Activated CD4-positive, alpha-beta T cell treated with anti-CD3 and anti-CD28 coated beads, Interleukin-2, amount 10 ng/mL, durations not matched to agents 24 days and 14 days (primary cell): ENCODE measurements at regions of chr3 and their contacts with region 1.

Region 1: GRCh38 chr3:27927882-27928281 is 205.8 kb upstream of the EOMES start:
- DNase-seq: no peak
- H3K4me3 Mint-ChIP-seq: peak overlapping the region; percentile 45
- H3K27ac Mint-ChIP-seq: peak overlapping the region; percentile 66
- H3K4me1 Mint-ChIP-seq: peaks cover 43% of the 10 kb centered on the region
- H3K27me3 Mint-ChIP-seq: no peaks in the 10 kb centered on the region

Region 2: GRCh38 chr3:27454914-27455313 is 473.0 kb before region 1 on chr3:
- intact Hi-C with region 1: no loop called
- DNase-seq: no peak
- H3K4me3 Mint-ChIP-seq: peak overlapping the region; percentile 39
- H3K27ac Mint-ChIP-seq: peak overlapping the region; percentile 83
- H3K4me1 Mint-ChIP-seq: peaks cover 26% of the 10 kb centered on the region
- H3K27me3 Mint-ChIP-seq: no peaks in the 10 kb centered on the region

Region 3: GRCh38 chr3:27712136-27713077 is 215.5 kb before region 1 on chr3:
- intact Hi-C with region 1: loop called (anchors 5 kb)
- DNase-seq: peak; percentile 94
- H3K4me3 Mint-ChIP-seq: peak overlapping the region; percentile 94
- H3K27ac Mint-ChIP-seq: peak overlapping the region; percentile 68
- H3K4me1 Mint-ChIP-seq: peaks cover 26% of the 10 kb centered on the region
- H3K27me3 Mint-ChIP-seq: peaks cover 66% of the 10 kb centered on the region

Region 4: DNA sequence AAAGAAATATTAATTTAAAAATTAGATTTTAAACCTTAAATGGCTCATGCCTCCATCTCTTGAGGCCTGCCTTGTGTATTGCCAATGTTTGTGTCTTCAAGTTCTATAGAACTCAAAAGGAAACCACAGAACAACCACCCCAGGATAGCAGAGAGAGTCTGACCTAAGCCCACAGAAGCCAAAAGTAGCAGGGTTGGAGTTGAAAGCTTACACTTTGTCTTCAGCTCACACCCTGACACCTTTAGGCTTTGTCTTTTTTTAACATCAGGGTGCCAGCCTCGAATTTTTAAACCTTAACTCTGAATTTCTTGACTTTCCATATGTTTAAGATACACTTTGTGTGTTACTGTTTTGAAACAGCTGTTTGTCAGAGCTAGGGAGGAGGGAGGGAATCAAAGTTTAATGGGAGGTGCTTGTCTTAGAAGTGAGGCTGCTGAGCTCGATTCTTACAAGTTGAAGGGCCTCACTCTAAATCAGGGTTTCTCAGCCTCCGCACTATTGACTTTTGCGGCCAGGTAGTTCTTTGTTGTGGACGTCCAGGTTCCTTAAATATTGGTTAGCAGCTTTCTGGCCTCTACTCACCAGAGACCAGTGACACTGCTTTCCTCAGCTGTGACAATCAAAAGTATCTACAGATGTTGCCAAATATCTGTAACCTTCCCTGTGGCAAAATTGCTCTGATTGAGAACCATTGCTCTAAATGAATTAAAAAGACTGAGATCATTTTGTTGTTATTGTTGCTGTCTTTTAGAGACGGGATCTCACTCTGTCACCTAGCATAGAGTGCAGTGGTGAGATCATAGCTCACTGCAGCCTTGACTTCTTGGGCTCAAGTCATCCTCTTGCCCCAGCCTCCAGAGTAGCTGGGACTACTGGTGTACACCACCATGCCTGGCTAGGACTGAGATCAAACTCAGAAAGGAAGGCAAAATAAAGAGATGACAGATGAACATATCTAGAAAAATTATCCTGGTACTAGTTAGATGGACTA is 66.5 kb before region 1 on chr3:
- intact Hi-C with region 1: loop called (anchors 5 kb)
- DNase-seq: peak; percentile 83
- H3K4me3 Mint-ChIP-seq: peak overlapping the region; percentile 52
- H3K27ac Mint-ChIP-seq: peak overlapping the region; percentile 87
- H3K4me1 Mint-ChIP-seq: peaks cover 19% of the 10 kb centered on the region
- H3K27me3 Mint-ChIP-seq: no peaks in the 10 kb centered on the region

Region 5: DNA sequence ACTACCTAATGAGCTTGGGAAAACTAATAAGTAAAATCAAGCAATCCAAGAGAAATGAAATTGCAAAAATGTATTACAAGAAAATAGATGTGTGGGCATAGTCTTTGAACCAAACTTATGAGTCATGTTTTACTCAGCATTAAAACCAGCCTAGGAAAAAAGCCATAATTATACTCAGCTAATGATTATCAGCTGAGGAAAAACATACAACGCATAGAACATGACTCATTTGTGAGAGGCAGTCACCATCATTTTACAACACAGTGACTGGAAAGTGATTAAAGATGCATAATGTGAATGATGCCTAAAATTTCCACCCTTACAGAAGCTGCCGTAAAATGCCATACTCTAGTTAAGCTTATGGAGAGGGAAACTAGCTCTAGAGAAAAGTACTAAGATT is 32.3 kb after region 1 on chr3:
- intact Hi-C with region 1: loop called (anchors 2 kb)
- DNase-seq: no peak
- H3K4me3 Mint-ChIP-seq: no peak overlapping the region
- H3K27ac Mint-ChIP-seq: no peak overlapping the region
- H3K4me1 Mint-ChIP-seq: peaks cover 5% of the 10 kb centered on the region
- H3K27me3 Mint-ChIP-seq: no peaks in the 10 kb centered on the region

Region 6: GRCh38 chr3:28348629-28349483 is 421.0 kb after region 1 on chr3 and contains the starts of genes AZI2 and ZCWPW2:
- intact Hi-C with region 1: loop called (anchors 5 kb)
- DNase-seq: peak; percentile 98
- H3K4me3 Mint-ChIP-seq: peak within 1 kb of the TSS; percentile 98
- H3K27ac Mint-ChIP-seq: peak within 1 kb of the TSS; percentile 96
- H3K4me1 Mint-ChIP-seq: peaks cover 41% of the 10 kb centered on the region
- H3K27me3 Mint-ChIP-seq: no peaks in the 10 kb centered on the region
- total RNA-seq, gene AZI2: 35.6 and 38.7 TPM in 2 replicates
- total RNA-seq, gene ZCWPW2: 0.14 TPM in 1 of 2 replicates, not detected in the other